ENCODE measurements at regions of chr7 and their contacts with region 1.

Region 1: GRCh38 chr7:44973610-44974401 is 5.0 kb downstream of the MYO1G start:
- DNase-seq: peak; percentile 70
- ATAC-seq: peak; percentile 15
- H3K4me3 Mint-ChIP-seq: peak overlapping the region; percentile 100
- H3K27ac Mint-ChIP-seq: peak overlapping the region; percentile 100
- H3K4me1 Mint-ChIP-seq: peaks cover 31% of the 10 kb centered on the region
- H3K27me3 Mint-ChIP-seq: no peaks in the 10 kb centered on the region
- CTCF ChIP-seq: peak; percentile 55

Region 2: DNA sequence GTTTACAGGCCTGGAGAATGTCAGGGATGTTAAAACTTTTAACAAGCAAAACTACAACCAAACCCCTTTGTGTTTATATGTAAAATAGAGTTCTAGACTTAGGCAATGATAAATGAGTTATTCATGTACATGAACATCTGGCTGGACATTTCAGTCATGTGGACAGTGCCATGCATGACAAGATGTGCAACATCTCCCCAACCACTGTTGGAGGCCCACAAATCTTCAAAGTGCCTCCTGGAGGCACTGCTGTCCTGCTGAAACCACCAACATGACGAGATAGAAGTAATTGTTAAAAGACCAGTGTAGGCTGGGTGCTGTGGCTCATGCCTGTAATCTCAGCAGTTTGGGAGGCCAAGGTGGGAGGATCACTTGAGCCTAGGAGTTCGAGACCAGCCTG is 158.9 kb before region 1 on chr7:
- CTCF ChIA-PET with region 1: no interaction called
- POLR2A ChIA-PET with region 1: no interaction called
- intact Hi-C with region 1: no loop called
- DNase-seq: no peak
- ATAC-seq: no peak
- H3K4me3 Mint-ChIP-seq: no peak overlapping the region
- H3K27ac Mint-ChIP-seq: no peak overlapping the region
- H3K4me1 Mint-ChIP-seq: no peaks in the 10 kb centered on the region
- H3K27me3 Mint-ChIP-seq: no peaks in the 10 kb centered on the region
- CTCF ChIP-seq: no peak

Region 3: GRCh38 chr7:44858161-44858560 is 115.6 kb before region 1 on chr7:
- CTCF ChIA-PET with region 1: interaction called, 14 read pairs
- POLR2A ChIA-PET with region 1: interaction called, 3 read pairs
- intact Hi-C with region 1: no loop called
- DNase-seq: no peak
- ATAC-seq: no peak
- H3K4me3 Mint-ChIP-seq: no peak overlapping the region
- H3K27ac Mint-ChIP-seq: no peak overlapping the region
- H3K4me1 Mint-ChIP-seq: peaks cover 21% of the 10 kb centered on the region
- H3K27me3 Mint-ChIP-seq: peaks cover 3% of the 10 kb centered on the region
- CTCF ChIP-seq: peak; percentile 57

Region 4: DNA sequence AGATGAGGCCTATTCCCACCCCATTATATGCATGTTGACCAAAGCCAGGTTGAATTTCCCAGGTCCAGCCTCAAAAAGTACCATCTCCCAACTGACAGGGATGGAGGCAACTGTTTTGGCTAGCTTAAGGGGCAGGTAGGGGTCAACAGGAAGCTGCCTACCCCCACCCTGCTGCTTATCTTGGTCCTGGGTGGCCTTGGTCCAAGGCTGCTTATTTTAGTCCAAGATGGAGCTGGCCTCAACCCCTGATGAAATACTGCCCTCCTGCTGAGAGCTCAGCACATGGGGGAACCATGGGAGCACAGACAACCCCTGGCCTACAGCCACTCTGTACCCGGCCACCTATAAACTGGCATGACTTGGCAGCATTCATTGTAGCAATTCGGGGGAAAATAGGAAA is 18.1 kb before region 1 on chr7:
- CTCF ChIA-PET with region 1: interaction called, 4 read pairs
- POLR2A ChIA-PET with region 1: interaction called, 317 read pairs
- intact Hi-C with region 1: no loop called
- DNase-seq: peak; percentile 9
- ATAC-seq: no peak
- H3K4me3 Mint-ChIP-seq: no peak overlapping the region
- H3K27ac Mint-ChIP-seq: no peak overlapping the region
- H3K4me1 Mint-ChIP-seq: peaks cover 19% of the 10 kb centered on the region
- H3K27me3 Mint-ChIP-seq: no peaks in the 10 kb centered on the region
- CTCF ChIP-seq: no peak

Region 5: DNA sequence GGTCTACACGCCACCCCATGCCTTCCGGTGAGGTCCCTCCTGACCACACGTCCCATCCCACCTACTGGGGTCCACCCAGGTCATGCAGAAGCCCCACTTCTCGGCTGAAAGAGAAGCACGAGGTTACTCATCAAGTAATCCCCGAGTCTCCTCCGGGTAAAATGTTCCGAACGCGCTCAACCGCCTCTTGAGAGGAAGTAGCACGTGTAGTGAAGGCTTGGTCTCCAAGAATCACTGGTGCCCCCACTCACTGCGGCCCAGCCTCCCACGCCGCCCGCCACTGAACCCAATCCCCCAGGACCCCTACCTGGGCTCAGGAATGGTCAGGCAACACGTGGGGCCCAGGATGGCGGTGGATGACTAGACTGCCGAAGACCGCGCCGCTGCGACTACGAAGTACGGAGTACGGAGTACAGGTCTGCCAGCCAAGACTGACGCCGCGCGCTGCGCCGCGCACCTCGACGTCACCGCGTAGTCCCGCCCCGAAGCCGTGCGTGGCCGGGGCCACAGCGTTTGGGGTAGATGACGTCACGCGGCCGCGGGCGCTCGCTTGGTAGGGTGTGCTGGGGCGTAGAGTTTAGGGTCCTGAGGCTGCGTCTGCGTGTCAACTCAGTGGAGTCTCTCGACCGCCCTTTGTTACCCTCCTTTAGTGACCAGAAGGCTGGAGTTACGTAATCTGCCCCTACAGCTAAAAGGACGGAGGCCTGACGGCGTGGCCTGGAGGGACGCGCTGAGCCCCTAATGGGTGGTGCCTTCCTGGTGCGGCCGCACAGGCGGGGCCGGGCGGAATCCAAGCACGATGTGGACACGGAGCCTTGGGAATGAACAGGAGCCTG is 12.6 kb after region 1 on chr7:
- CTCF ChIA-PET with region 1: interaction called, 24 read pairs
- POLR2A ChIA-PET with region 1: interaction called, 317 read pairs
- intact Hi-C with region 1: no loop called
- DNase-seq: peak; percentile 97
- ATAC-seq: peak; percentile 91
- H3K4me3 Mint-ChIP-seq: peak overlapping the region; percentile 100
- H3K27ac Mint-ChIP-seq: peak overlapping the region; percentile 100
- H3K4me1 Mint-ChIP-seq: peaks cover 48% of the 10 kb centered on the region
- H3K27me3 Mint-ChIP-seq: no peaks in the 10 kb centered on the region
- CTCF ChIP-seq: no peak

Region 6: DNA sequence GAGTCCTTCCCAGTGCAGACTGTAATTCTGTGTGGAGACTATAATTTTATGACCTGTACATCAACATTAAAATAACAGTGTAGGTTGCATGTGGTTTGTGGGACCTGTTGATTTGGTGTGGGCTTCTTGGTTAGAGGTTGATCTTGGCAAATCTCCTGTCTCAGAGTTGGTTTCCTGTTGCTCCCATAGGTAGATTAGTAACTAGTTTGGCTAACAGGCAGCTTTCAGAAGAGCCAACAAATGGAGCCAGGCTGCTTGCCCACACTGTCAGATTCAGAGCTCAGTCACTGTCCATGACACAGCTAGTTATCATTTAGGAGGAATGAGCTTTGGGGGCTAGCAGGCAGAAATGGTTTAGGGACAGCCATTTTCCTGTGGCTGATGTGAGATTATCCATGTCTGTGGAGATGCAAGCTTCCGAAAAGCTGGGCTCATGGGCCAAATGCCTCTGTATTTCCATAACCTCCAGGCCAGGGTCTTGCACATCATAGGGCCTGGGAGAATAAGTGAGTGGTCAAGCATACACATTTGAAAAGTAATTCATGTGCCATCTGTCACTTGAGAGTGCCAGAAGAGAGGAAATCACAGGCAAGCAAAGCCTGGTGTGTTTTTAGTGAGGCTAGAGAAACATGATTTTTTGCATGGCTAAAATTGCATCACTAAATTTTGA is 59.6 kb after region 1 on chr7:
- CTCF ChIA-PET with region 1: interaction called, 13 read pairs
- POLR2A ChIA-PET with region 1: interaction called, 12 read pairs
- intact Hi-C with region 1: no loop called
- DNase-seq: peak; percentile 51
- ATAC-seq: peak; percentile 55
- H3K4me3 Mint-ChIP-seq: peak overlapping the region; percentile 11
- H3K27ac Mint-ChIP-seq: peak overlapping the region; percentile 85
- H3K4me1 Mint-ChIP-seq: peaks cover 78% of the 10 kb centered on the region
- H3K27me3 Mint-ChIP-seq: no peaks in the 10 kb centered on the region
- CTCF ChIP-seq: no peak

Region 7: GRCh38 chr7:45136106-45137060 is 162.6 kb after region 1 on chr7:
- CTCF ChIA-PET with region 1: interaction called, 87 read pairs
- POLR2A ChIA-PET with region 1: interaction called, 14 read pairs
- intact Hi-C with region 1: no loop called
- DNase-seq: peak; percentile 77
- ATAC-seq: peak; percentile 95
- H3K4me3 Mint-ChIP-seq: no peak overlapping the region
- H3K27ac Mint-ChIP-seq: peak overlapping the region; percentile 59
- H3K4me1 Mint-ChIP-seq: peaks cover 9% of the 10 kb centered on the region
- H3K27me3 Mint-ChIP-seq: no peaks in the 10 kb centered on the region
- CTCF ChIP-seq: peak; percentile 91